Pancreas (tissue), 10 donors: ENCODE measurements at regions of chr2 and their contacts with region 1.

Region 1: DNA sequence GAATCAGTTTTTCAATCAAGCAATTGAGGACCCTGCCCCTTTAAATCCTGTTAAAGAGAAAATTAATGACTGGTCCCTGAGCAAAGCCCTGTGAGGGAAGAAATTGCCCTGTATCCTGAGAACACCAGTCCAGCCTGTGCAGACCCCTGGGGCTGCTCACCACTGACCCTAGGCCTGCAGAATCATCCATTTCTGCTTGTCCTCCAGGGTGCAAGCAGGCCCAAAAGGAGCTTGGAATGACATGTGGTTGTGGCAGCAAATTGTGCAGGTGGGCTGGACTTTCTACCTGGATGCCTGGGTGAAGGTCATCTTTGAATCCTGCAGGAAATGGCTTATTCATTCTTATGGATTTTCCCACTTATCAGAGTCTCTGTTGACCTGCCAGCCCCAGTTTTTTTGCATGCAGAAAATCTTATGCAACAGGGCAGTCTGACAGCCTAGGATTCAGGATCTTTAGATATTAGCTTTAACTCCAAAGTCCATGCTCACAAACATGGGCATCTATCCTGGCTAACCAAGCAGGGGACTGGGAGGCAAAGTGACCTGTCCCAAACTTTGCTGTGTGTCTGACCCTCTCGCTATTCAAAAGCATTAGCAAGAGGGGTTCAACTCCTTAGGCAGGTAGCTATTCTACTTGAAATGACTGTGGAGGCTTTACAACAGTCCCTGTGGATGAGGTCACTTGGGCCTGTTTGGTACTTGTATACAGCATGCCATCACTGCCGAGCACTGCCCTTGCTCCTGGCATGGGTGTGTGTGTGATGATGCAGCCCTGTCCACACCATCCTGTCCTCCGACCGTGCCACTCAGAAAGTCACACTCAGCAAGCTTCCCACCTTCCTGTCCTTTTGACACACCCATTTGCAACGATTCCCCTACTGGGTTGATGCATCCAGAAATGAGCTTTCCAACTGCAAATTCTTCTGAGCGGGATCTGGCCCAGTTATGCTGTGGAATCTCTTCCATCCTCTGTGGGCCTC is 85.3 kb downstream of the CAPN13 start:
- DNase-seq: peak in 1 of 6 donors; percentile 30
- ATAC-seq: no peak
- H3K4me3 ChIP-seq: no peak overlapping the region
- H3K27ac ChIP-seq: no peak overlapping the region
- H3K4me1 ChIP-seq: no peaks in the 10 kb centered on the region
- H3K27me3 ChIP-seq: no peaks in the 10 kb centered on the region
- CTCF ChIP-seq: no peak

Region 2: DNA sequence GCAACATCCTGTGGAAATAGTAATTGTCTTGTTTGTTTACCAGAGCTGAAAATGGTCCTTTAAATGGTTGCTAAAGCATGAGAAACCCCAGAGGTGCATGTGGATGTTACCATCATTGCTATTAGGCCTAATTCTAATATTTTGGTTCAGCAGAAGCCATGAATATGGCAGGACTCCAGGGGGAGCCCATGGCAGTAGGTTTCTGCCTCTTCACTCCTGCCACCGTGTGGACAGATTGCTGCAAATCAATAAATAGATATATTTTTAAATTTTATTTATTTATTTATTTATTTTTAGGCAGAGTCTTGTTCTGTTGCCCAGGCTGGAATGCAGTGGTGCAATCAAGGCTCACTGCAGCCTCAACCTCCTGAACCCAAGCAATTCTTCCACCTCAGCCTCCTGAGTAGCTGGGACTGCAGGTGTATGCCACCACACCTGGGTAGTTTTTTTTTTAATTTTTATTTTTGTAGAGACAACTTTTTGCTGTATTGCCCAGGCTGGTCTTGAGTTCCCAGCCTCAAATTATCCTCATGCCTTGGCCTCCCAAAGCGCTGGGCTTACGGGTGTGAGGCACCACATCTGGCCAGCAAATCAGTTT is 140.2 kb after region 1 on chr2:
- intact Hi-C with region 1: loop called in 2 of 3 experiments (anchors 5 kb)
- DNase-seq: peak in 4 of 6 donors; percentile 46 to 64 (median 57)
- ATAC-seq: peak in 3 of 4 donors; percentile 73 to 84 (median 80)
- H3K4me3 ChIP-seq: no peak overlapping the region
- H3K27ac ChIP-seq: no peak overlapping the region
- H3K4me1 ChIP-seq: no peaks in the 10 kb centered on the region
- H3K27me3 ChIP-seq: no peaks in the 10 kb centered on the region
- CTCF ChIP-seq: peak in 3 of 4 donors; percentile 46 to 65 (median 47)

Region 3: DNA sequence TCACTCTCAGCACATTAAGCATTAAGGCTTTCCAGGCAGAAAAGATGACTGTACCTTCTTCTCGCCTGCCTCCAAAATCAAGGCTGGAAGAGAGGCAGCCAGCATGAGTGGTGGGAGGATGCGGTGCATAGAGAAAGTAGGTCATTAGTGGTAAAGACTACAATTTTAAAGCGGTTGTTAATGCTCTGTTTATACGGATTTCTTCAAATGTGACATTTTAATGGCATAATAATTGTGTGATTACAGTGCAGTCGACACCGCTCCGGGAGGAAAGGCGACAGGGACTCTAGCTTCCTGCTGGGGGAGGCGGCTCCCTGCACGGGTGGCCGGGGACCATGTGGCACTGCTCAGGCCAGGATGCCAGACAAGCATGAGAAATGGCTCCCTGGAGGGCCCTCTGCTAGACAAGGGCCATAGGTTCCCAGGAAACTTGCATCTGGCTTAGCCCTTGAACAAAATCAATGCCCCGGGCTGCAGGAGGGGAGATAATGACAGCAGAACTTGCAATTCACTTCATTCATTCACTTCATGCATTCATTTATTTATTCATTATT is 286.7 kb after region 1 on chr2:
- intact Hi-C with region 1: no loop called
- DNase-seq: no peak
- ATAC-seq: peak in 1 of 4 donors; percentile 43
- H3K4me3 ChIP-seq: no peak overlapping the region
- H3K27ac ChIP-seq: no peak overlapping the region
- H3K4me1 ChIP-seq: no peaks in the 10 kb centered on the region
- H3K27me3 ChIP-seq: no peaks in the 10 kb centered on the region
- CTCF ChIP-seq: no peak

Region 4: DNA sequence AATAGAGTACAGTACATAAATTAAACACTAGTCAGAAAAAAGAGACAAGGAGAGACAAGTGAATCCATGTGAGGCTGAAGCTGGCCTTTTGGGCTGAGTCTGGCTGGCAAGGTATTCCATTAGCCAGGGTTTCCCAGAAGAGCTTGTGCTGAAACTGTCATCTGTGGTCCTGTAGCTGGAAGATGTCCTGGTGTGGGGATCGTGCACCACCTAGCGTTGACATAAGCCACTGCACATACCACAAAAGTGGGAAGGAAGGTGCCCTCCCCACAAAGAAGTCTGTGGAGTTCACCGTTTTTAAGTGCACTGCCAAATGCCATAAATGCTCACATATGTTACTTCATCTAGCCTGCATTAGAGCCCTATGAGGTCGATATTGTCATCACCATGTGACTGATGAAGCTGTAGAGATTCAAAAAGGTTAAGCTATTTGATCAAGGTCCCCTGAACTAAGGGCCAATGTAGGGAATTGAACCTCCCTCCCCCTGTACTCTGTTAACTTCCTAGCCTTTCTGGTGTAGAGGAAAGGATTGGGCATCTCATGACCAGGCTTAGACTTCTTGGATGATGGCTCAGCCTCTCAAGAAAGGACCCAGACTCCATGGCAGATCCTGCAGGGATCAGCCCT is 448.2 kb after region 1 on chr2:
- intact Hi-C with region 1: loop called in 2 of 3 experiments (anchors 5 kb)
- DNase-seq: peak in 5 of 6 donors; percentile 34 to 63 (median 42)
- ATAC-seq: peak; percentile 80 to 99 (median 96)
- H3K4me3 ChIP-seq: no peak overlapping the region
- H3K27ac ChIP-seq: no peak overlapping the region
- H3K4me1 ChIP-seq: no peaks in the 10 kb centered on the region
- H3K27me3 ChIP-seq: no peaks in the 10 kb centered on the region
- CTCF ChIP-seq: peak; percentile 75 to 89 (median 79)